ENCODE measurements at regions of chr3 and their contacts with region 1.

Region 1: DNA sequence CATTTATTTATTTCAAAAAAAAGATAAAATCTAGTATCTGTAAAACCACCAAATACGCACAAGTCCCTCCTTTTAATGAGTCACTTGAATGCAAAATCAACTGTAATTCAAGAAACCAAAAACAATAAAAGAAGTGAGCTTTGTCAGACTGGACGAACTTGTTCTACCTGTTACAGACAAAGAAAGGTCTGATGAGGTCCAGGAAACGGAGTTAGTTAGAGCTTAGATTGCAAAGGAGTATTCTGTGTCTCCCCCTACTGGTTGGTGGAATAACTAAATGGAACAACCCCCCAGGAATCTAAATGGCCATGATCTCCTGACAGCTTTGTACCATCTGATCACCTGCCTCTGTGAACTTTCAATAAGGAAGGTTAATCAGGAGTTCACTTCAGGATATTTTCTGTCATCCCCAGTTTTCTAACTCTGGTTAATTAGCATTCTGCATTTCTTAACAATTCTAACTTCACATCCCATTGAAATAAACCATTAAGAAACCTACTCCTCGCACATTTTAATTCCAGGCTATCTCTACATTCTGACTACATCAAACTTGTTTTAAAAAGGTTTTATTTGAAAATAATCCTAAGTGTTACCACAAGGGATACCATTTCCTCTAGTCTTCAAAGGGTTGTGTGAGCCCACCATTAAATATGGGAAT is 333.0 kb upstream of the SATB1 start:
- DNase-seq: peak; percentile 99
- ATAC-seq: peak; percentile 95
- H3K4me3 ChIP-seq: no peak overlapping the region
- H3K27ac ChIP-seq: peak overlapping the region; percentile 84
- H3K4me1 ChIP-seq: peaks cover 14% of the 10 kb centered on the region
- H3K27me3 ChIP-seq: no peaks in the 10 kb centered on the region
- CTCF ChIP-seq: peak; percentile 92

Region 2: DNA sequence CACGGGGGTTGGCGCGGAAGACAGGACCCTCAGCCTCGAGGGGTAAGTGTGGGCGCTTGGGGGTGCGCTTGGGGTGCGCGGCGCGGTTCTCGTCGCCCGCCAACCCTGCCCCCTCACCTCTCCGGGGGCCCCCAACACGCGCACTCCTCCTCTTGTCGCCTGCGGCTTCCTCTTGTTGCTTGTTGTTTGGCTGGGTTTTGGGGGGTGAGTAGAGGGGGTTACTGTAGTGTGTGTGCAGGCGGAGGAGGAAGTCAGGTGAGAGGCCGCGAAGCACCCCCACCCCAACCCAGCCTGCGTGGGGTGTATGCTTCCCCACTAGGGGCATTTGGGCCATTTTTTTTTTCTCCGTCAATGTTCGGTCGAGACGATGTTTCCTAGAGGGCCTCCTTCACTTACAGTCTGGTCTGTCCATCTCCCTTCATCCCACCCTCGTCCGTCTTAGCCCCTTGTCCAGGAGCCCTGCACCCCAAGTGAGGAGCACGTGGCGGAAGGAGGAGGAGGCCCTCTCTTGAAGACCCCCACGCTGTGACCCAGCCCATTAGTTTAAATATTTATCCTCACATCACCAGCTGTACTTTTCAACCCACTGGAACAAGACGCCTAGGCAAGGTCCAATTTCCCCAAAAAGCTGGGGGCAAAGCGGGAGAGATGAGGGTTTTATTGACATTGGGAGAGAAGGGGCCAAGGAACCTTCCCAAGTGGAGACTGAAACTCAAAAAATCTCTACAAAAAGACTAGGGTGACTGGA is 312.6 kb before region 1 on chr3:
- CTCF ChIA-PET with region 1: interaction called, 4 read pairs
- POLR2A ChIA-PET with region 1: no interaction called
- intact Hi-C with region 1: loop called (anchors 1 kb)
- DNase-seq: no peak
- ATAC-seq: peak; percentile 9
- H3K4me3 ChIP-seq: peak overlapping the region; percentile 74
- H3K27ac ChIP-seq: no peak overlapping the region
- H3K4me1 ChIP-seq: peaks cover 22% of the 10 kb centered on the region
- H3K27me3 ChIP-seq: peaks cover 28% of the 10 kb centered on the region
- CTCF ChIP-seq: no peak

Region 3: GRCh38 chr3:18559331-18559842 is 198.8 kb before region 1 on chr3:
- CTCF ChIA-PET with region 1: interaction called, 8 read pairs
- POLR2A ChIA-PET with region 1: no interaction called
- intact Hi-C with region 1: loop called (anchors 1 kb)
- DNase-seq: peak; percentile 82
- ATAC-seq: peak; percentile 47
- H3K4me3 ChIP-seq: no peak overlapping the region
- H3K27ac ChIP-seq: peak overlapping the region; percentile 21
- H3K4me1 ChIP-seq: peaks cover 53% of the 10 kb centered on the region
- H3K27me3 ChIP-seq: no peaks in the 10 kb centered on the region
- CTCF ChIP-seq: peak; percentile 89

Region 4: DNA sequence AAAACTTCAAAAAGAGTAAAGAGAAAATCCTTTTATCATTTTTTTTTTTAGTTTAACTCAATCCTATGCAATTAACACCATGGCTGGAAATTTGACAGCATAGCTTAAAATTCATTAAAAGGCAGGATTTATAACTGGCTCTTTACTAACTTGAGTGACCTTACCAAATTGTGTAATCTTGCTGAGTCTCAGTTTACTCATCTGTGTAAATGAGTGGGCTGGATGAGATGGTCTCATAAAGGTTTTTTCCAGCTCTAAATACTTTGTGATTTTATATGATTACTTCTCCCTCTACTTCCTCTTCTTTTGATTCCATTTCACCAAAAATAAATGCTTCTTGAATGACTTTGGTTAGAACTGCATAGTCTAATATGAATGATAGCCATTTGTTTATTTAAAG is 98.1 kb before region 1 on chr3:
- CTCF ChIA-PET with region 1: no interaction called
- POLR2A ChIA-PET with region 1: no interaction called
- intact Hi-C with region 1: loop called (anchors 5 kb)
- DNase-seq: peak; percentile 69
- ATAC-seq: peak; percentile 68
- H3K4me3 ChIP-seq: peak overlapping the region; percentile 19; the same call in 1 of the 2 replicates
- H3K27ac ChIP-seq: peak overlapping the region; percentile 70
- H3K4me1 ChIP-seq: peaks cover 31% of the 10 kb centered on the region
- H3K27me3 ChIP-seq: no peaks in the 10 kb centered on the region
- CTCF ChIP-seq: no peak

Region 5: DNA sequence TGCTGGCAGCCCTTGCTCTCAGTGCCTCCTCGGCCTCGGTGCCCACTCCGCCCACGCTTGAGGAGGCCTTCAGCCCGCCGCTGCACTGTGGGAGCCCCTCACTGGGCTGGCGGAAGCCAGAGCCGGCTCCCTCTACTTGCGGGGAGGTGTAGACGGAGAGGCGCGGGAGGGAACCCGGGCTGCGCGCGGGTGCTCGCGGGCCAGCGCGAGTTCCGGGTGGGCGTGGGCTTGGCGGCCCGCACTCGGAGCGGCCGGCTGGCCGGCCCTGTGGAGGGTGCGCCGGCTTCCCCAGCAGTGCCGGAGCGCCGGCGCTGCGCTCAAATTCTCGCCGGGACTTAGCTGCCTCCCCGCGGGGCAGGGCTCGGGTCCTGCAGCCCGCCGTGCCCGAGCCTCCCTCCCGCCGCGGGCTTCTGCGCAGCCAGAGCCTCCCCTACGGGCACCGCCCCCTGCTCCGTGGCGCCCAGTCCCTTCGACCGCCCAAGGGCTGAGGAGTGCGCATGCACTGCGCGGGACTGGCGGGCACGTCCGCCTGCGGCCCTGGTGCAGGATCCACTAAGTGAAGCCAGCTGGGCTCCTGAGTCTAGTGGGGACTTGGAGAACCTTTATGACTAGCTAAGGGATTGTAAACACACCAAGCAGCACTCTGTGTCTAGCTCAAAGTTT is 944.4 kb after region 1 on chr3:
- CTCF ChIA-PET with region 1: no interaction called
- POLR2A ChIA-PET with region 1: no interaction called
- intact Hi-C with region 1: no loop called
- DNase-seq: no peak
- ATAC-seq: no peak
- H3K4me3 ChIP-seq: no peak overlapping the region
- H3K27ac ChIP-seq: no peak overlapping the region
- H3K4me1 ChIP-seq: no peaks in the 10 kb centered on the region
- H3K27me3 ChIP-seq: no peaks in the 10 kb centered on the region
- CTCF ChIP-seq: no peak

Measured in PC-3 (cell line).